T-cell (primary cell): ENCODE measurements at regions of chr18 and their contacts with region 1.

Region 1: GRCh38 chr18:23703057-23703986 is 14.1 kb downstream of the LAMA3 start:
- DNase-seq: peak in 11 of 35 experiments; percentile 1 to 65 (median 9)
- ATAC-seq: peak; percentile 52 to 81 (median 56)
- H3K4me3 ChIP-seq: no peak overlapping the region
- H3K4me3 Mint-ChIP-seq: no peak overlapping the region
- H3K27ac ChIP-seq: no peak overlapping the region
- H3K27ac Mint-ChIP-seq: no peak overlapping the region
- H3K4me1 ChIP-seq: peaks cover 0 to 8% of the 10 kb centered on the region in 2 experiments
- H3K4me1 Mint-ChIP-seq: no peaks in the 10 kb centered on the region
- H3K27me3 ChIP-seq: peaks cover 0 to 5% of the 10 kb centered on the region in 2 experiments
- H3K27me3 Mint-ChIP-seq: peaks cover 21 to 32% of the 10 kb centered on the region in 2 donors

Region 2: DNA sequence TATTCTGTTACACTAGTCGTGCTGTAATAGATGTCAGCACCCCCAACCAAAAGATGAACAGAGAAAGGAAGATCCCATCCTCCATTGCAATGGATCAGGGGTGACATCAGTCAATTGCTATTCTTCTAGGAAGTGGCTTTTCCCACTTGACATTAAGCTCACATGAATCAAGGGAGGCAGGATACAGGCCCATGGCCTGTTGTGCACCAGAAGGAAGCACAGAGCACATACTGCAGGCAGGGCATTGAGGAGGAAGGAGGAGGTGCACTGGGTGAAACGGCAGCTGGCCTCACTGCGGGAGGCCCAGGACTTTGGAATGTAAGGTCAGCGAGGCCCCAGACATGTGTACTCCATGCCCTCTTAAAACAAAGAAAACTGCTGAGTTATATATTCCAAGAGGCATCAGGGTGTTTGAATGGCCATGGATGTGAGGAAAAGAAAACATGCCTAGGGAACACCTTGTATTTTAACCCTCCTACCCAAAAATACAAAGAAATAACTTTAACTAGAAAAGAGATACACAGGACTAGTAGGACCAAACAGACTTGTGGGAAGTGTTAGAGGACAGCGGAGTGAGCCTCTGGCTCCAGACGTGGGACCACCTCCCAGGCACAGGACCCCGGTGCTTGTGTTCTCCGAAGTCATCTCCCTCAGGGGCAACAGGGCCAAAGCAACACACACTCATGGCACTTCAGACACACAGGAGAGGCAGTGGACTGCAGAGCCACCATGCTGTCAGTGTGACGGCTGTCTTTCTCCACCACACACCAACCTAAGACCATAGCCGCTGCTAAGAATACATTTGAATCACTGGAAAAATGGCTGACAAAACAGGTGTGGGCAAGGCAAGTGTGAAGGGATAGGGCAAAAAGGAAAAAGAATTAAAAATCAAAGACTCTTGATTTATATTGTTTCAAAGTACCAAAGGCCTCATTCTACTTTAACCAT is 301.6 kb before region 1 on chr18:
- CTCF ChIA-PET with region 1: no interaction called
- POLR2A ChIA-PET with region 1: no interaction called
- DNase-seq: no peak
- ATAC-seq: no peak
- H3K4me3 ChIP-seq: no peak overlapping the region
- H3K4me3 Mint-ChIP-seq: no peak overlapping the region
- H3K27ac ChIP-seq: no peak overlapping the region
- H3K27ac Mint-ChIP-seq: no peak overlapping the region
- H3K4me1 ChIP-seq: peaks cover 12 to 15% of the 10 kb centered on the region in 2 experiments
- H3K4me1 Mint-ChIP-seq: peaks cover 18 to 27% (median 25%) of the 10 kb centered on the region in 3 donors
- H3K27me3 ChIP-seq: no peaks in the 10 kb centered on the region
- H3K27me3 Mint-ChIP-seq: no peaks in the 10 kb centered on the region

Region 3: DNA sequence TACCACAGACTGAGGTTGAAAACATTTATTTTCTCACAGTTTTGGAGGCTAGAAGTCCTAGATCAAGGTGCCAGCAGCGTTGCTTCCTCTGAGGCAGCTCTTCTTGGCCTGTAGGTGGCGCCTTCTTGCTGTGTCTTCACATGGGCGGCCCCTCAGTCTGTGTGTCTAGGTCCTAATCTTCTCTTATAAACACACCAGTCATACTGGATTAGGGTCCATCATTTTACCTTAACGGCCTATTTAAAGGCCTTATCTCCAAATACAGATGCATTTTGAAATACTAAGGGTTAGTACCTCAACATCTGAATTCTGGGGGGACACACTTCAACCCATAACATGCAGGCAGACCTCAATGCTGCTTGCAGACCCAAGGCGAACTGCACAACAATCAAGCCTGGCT is 204.4 kb before region 1 on chr18:
- CTCF ChIA-PET with region 1: interaction called in 1 of 2 experiments, 11 read pairs
- POLR2A ChIA-PET with region 1: no interaction called
- DNase-seq: peak; percentile 30 to 87 (median 66)
- ATAC-seq: peak; percentile 19 to 32 (median 26)
- H3K4me3 ChIP-seq: no peak overlapping the region
- H3K4me3 Mint-ChIP-seq: no peak overlapping the region
- H3K27ac ChIP-seq: no peak overlapping the region
- H3K27ac Mint-ChIP-seq: peak overlapping the region in 1 of 2 donors; percentile 36
- H3K4me1 ChIP-seq: peaks cover 0 to 21% of the 10 kb centered on the region in 2 experiments
- H3K4me1 Mint-ChIP-seq: peaks cover 18 to 30% (median 27%) of the 10 kb centered on the region in 3 donors
- H3K27me3 ChIP-seq: no peaks in the 10 kb centered on the region
- H3K27me3 Mint-ChIP-seq: no peaks in the 10 kb centered on the region

Region 4: DNA sequence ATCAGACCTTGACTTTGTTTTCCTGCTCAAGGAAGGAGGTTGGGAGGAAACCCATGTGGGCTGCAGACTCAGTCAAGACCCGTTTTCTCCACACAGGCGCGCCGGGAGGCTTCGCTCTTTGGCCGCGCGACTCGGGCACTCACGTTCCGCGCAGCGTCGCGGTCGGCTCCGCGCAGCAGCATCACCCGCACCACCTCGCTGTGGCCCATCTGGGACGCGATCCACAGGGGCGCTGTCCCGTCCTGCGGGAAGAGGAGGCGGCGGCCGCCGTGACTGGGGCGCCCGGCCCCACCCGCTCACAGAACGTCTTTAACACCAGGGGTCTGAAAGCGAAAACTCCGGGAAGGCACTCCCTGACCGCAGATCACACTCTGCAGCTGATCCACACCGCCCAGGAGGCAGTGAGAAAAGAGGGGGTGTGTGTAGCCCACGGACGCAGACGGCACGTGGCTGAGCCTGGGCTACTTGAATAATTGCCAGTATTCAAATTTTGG is 83.9 kb before region 1 on chr18:
- CTCF ChIA-PET with region 1: interaction called, 15 to 41 read pairs
- POLR2A ChIA-PET with region 1: no interaction called
- DNase-seq: peak in 4 of 35 experiments; percentile 2 to 25 (median 8)
- ATAC-seq: peak in 3 of 4 experiments; percentile 34 to 59 (median 47)
- H3K4me3 ChIP-seq: peak overlapping the region; percentile 34 to 52
- H3K4me3 Mint-ChIP-seq: peak overlapping the region; percentile 53 to 63 (median 59)
- H3K27ac ChIP-seq: no peak overlapping the region
- H3K27ac Mint-ChIP-seq: peak overlapping the region in 1 of 2 donors; percentile 62
- H3K4me1 ChIP-seq: peaks cover 0 to 14% of the 10 kb centered on the region in 2 experiments
- H3K4me1 Mint-ChIP-seq: peaks cover 0 to 15% (median 3%) of the 10 kb centered on the region in 3 donors
- H3K27me3 ChIP-seq: peaks cover 10 to 38% of the 10 kb centered on the region in 2 experiments
- H3K27me3 Mint-ChIP-seq: peaks cover 34 to 39% of the 10 kb centered on the region in 2 donors

Region 5: GRCh38 chr18:23629444-23629946 is 73.8 kb before region 1 on chr18:
- CTCF ChIA-PET with region 1: interaction called, 6 to 41 read pairs
- POLR2A ChIA-PET with region 1: no interaction called
- DNase-seq: no peak
- ATAC-seq: no peak
- H3K4me3 ChIP-seq: no peak overlapping the region
- H3K4me3 Mint-ChIP-seq: no peak overlapping the region
- H3K27ac ChIP-seq: no peak overlapping the region
- H3K27ac Mint-ChIP-seq: no peak overlapping the region
- H3K4me1 ChIP-seq: no peaks in the 10 kb centered on the region
- H3K4me1 Mint-ChIP-seq: peaks cover 0 to 7% (median 0%) of the 10 kb centered on the region in 3 donors
- H3K27me3 ChIP-seq: peaks cover 0 to 10% of the 10 kb centered on the region in 2 experiments
- H3K27me3 Mint-ChIP-seq: peaks cover 0 to 3% of the 10 kb centered on the region in 2 donors

Region 6: GRCh38 chr18:23650968-23651927 is 52.1 kb before region 1 on chr18:
- CTCF ChIA-PET with region 1: no interaction called
- POLR2A ChIA-PET with region 1: no interaction called
- DNase-seq: no peak
- ATAC-seq: no peak
- H3K4me3 ChIP-seq: no peak overlapping the region
- H3K4me3 Mint-ChIP-seq: no peak overlapping the region
- H3K27ac ChIP-seq: no peak overlapping the region
- H3K27ac Mint-ChIP-seq: no peak overlapping the region
- H3K4me1 ChIP-seq: no peaks in the 10 kb centered on the region
- H3K4me1 Mint-ChIP-seq: peaks cover 0 to 7% (median 2%) of the 10 kb centered on the region in 3 donors
- H3K27me3 ChIP-seq: peaks cover 0 to 3% of the 10 kb centered on the region in 2 experiments
- H3K27me3 Mint-ChIP-seq: peaks cover 3 to 8% of the 10 kb centered on the region in 2 donors

Region 7: GRCh38 chr18:23725832-23726661 is 22.7 kb after region 1 on chr18:
- CTCF ChIA-PET with region 1: no interaction called
- POLR2A ChIA-PET with region 1: no interaction called
- DNase-seq: no peak
- ATAC-seq: no peak
- H3K4me3 ChIP-seq: no peak overlapping the region
- H3K4me3 Mint-ChIP-seq: no peak overlapping the region
- H3K27ac ChIP-seq: no peak overlapping the region
- H3K27ac Mint-ChIP-seq: no peak overlapping the region
- H3K4me1 ChIP-seq: no peaks in the 10 kb centered on the region
- H3K4me1 Mint-ChIP-seq: no peaks in the 10 kb centered on the region
- H3K27me3 ChIP-seq: peaks cover 0 to 20% of the 10 kb centered on the region in 2 experiments
- H3K27me3 Mint-ChIP-seq: peaks cover 12 to 22% of the 10 kb centered on the region in 2 donors